OCI-LY7 (cell line): ENCODE measurements at regions of chr12 and their contacts with region 1.

Region 1: DNA sequence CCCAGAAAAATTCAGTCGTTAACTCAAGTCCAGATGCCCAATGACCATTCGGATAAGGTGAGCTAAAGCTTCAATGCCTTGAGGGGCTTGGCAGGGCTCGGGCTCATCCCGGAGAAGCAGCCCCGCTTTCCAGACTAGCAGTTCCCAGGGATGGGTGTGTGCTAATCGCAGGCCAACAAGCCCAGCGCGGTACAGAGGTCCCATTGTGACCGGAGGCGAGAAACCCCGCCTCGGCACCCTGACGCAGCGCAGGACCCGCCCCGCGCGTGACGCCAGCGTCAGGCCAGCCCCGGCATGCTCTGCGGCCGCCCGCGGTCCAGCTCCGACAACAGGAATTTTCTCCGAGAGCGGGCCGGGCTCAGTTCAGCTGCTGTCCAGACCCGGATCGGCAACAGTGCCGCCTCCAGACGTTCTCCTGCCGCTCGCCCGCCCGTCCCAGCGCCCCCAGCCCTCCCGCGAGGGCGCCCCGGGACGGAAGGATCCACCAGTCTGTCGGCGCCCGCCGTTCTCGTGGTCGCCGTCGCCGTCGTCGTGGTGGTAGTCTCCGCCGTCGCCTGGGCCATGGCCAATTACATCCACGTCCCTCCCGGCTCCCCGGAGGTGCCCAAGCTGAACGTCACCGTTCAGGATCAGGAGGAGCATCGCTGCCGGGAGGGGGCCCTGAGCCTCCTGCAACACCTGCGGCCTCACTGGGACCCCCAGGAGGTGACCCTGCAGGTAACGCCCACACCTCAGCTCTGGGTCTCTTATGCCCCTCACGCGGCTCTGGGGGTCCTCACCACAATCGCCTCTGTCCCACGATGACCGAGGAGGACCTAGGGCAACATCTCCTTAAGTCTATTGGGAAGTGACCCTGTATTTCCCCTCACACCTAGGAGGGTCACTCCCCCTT is at the start of gene ETNK1:
- DNase-seq: peak; percentile 81
- H3K4me3 ChIP-seq: peak within 1 kb of the TSS; percentile 97
- H3K27ac ChIP-seq: peak within 1 kb of the TSS; percentile 36
- H3K4me1 ChIP-seq: peaks cover 29% of the 10 kb centered on the region
- CTCF ChIP-seq: no peak
- total RNA-seq, gene ETNK1: 15.1 and 23.7 TPM in 2 replicates

Region 2: DNA sequence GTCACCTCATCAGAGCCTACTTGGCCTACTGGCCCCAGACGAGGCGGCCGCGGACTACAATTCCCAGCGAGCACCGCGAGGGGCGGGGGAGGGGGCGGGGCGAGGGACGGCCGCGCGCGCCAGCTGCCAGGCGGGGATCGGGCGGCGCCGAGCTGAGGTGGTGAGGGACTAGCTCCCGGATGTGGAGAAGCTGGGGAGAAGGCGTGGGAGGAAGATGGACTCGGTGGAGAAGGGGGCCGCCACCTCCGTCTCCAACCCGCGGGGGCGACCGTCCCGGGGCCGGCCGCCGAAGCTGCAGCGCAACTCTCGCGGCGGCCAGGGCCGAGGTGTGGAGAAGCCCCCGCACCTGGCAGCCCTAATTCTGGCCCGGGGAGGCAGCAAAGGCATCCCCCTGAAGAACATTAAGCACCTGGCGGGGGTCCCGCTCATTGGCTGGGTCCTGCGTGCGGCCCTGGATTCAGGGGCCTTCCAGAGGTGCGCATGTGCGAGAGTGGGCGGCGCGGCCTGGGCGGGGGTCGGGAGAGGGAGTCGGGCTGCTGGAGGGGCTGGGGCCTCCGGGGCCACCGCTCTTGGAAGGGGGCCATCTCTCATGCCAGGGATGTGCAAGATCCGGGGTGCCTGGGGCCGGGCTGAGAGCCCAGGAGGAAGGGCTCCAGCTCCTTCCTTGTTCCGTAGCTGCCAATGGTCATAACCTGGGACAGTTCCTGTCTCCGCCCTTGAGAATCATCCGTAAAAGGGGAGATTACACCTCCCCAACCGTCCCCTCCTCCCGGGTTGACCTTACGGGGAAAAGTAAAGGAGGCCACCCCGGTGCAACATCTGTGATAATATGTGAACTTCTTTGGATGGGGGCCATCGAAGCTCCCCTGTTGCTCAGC is 578.8 kb before region 1 on chr12 and contains the start of gene CMAS:
- CTCF ChIA-PET with region 1: no interaction called
- POLR2A ChIA-PET with region 1: no interaction called
- intact Hi-C with region 1: loop called (anchors 5 kb)
- DNase-seq: peak; percentile 78
- H3K4me3 ChIP-seq: peak within 1 kb of the TSS; percentile 98
- H3K27ac ChIP-seq: peak within 1 kb of the TSS; percentile 52
- H3K4me1 ChIP-seq: peaks cover 4% of the 10 kb centered on the region
- CTCF ChIP-seq: no peak
- total RNA-seq, gene CMAS: 19.9 and 22.2 TPM in 2 replicates

Region 3: DNA sequence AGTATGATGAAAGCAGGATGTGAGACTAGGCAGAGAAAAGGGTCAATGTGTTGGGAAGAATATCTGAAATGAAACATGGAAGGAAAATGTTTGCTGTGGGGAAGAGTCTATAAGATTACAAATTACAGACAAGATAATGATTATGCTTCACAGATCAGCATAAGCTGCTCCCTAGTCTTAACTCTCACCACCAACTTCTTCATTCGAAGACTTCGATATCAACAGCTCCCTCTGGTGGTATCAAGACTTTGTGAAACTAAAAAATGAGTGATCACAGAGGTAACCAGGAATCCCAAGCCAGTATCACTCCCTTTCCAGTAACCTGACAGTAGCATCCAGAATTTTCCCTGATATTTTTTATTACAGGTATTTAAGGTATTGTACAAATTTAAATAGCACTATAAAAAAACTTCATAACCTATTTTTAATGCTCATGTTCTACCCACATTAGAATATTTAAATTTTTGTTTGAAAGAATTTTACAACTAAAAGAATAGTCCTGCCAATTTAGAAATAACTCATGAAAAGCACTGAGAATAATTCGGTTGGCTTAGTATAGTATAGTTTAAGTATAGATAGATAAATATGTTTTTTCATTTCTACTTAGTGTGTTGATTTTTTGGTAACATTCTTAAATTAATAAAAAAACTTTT is 165.2 kb before region 1 on chr12:
- CTCF ChIA-PET with region 1: no interaction called
- POLR2A ChIA-PET with region 1: interaction called, 4 read pairs
- intact Hi-C with region 1: loop called (anchors 10 kb)
- DNase-seq: peak; percentile 67
- H3K4me3 ChIP-seq: no peak overlapping the region
- H3K27ac ChIP-seq: no peak overlapping the region
- H3K4me1 ChIP-seq: no peaks in the 10 kb centered on the region
- CTCF ChIP-seq: peak; percentile 84

Region 4: GRCh38 chr12:22544038-22544979 is 80.8 kb before region 1 on chr12 and contains the start of gene C2CD5:
- CTCF ChIA-PET with region 1: no interaction called
- POLR2A ChIA-PET with region 1: interaction called, 7 read pairs
- intact Hi-C with region 1: loop called (anchors 1 kb)
- DNase-seq: peak; percentile 96
- H3K4me3 ChIP-seq: peak within 1 kb of the TSS; percentile 94
- H3K27ac ChIP-seq: peak within 1 kb of the TSS; percentile 78
- H3K4me1 ChIP-seq: peaks cover 24% of the 10 kb centered on the region
- CTCF ChIP-seq: peak; percentile 52; the same call in 1 of the 2 replicates
- total RNA-seq, gene C2CD5: 19.7 and 28.4 TPM in 2 replicates